H1 (cell line): ENCODE measurements at regions of chr5 and their contacts with region 1.

Region 1: GRCh38 chr5:112604732-112605630 is 132.7 kb upstream of the APC start:
- DNase-seq: no peak
- H3K4me3 ChIP-seq: no peak overlapping the region
- H3K27ac ChIP-seq: no peak overlapping the region
- H3K4me1 ChIP-seq: no peaks in the 10 kb centered on the region
- H3K27me3 ChIP-seq: no peaks in the 10 kb centered on the region
- CTCF ChIP-seq: peak; percentile 27 to 47 (median 35)
- EP300 ChIP-seq: no peak
- POLR2A ChIP-seq: no peak
- RAD21 ChIP-seq: peak; percentile 57 to 67

Region 2: GRCh38 chr5:112551419-112552032 is 53.5 kb before region 1 on chr5:
- CTCF ChIA-PET with region 1: interaction called, 35 read pairs
- POLR2A ChIA-PET with region 1: no interaction called
- DNase-seq: no peak
- H3K4me3 ChIP-seq: no peak overlapping the region
- H3K27ac ChIP-seq: no peak overlapping the region
- H3K4me1 ChIP-seq: no peaks in the 10 kb centered on the region
- H3K27me3 ChIP-seq: no peaks in the 10 kb centered on the region
- CTCF ChIP-seq: peak in 2 of 3 experiments; percentile 61 to 63; a peak in 2 of 4 replicates
- EP300 ChIP-seq: no peak
- POLR2A ChIP-seq: no peak
- RAD21 ChIP-seq: peak; percentile 86 to 87

Region 3: GRCh38 chr5:112594095-112594850 is 10.7 kb before region 1 on chr5:
- CTCF ChIA-PET with region 1: interaction called, 16 read pairs
- POLR2A ChIA-PET with region 1: interaction called, 3 read pairs
- DNase-seq: no peak
- H3K4me3 ChIP-seq: no peak overlapping the region
- H3K27ac ChIP-seq: no peak overlapping the region
- H3K4me1 ChIP-seq: no peaks in the 10 kb centered on the region
- H3K27me3 ChIP-seq: no peaks in the 10 kb centered on the region; a peak in 1 of 7 replicates
- CTCF ChIP-seq: no peak
- EP300 ChIP-seq: no peak
- POLR2A ChIP-seq: no peak
- RAD21 ChIP-seq: no peak

Region 4: GRCh38 chr5:112630246-112631009 is 25.4 kb after region 1 on chr5:
- CTCF ChIA-PET with region 1: no interaction called
- POLR2A ChIA-PET with region 1: no interaction called
- DNase-seq: no peak
- H3K4me3 ChIP-seq: no peak overlapping the region
- H3K27ac ChIP-seq: no peak overlapping the region
- H3K4me1 ChIP-seq: peaks cover 2 to 10% (median 6%) of the 10 kb centered on the region in 4 experiments; a peak in 4 of 7 replicates
- H3K27me3 ChIP-seq: no peaks in the 10 kb centered on the region; a peak in 1 of 7 replicates
- CTCF ChIP-seq: no peak
- EP300 ChIP-seq: no peak
- POLR2A ChIP-seq: no peak
- RAD21 ChIP-seq: no peak

Region 5: GRCh38 chr5:112657804-112658203 is 52.8 kb after region 1 on chr5:
- CTCF ChIA-PET with region 1: no interaction called
- POLR2A ChIA-PET with region 1: no interaction called
- DNase-seq: no peak
- H3K4me3 ChIP-seq: no peak overlapping the region
- H3K27ac ChIP-seq: no peak overlapping the region
- H3K4me1 ChIP-seq: no peaks in the 10 kb centered on the region
- H3K27me3 ChIP-seq: no peaks in the 10 kb centered on the region
- CTCF ChIP-seq: no peak
- EP300 ChIP-seq: no peak
- POLR2A ChIP-seq: no peak
- RAD21 ChIP-seq: peak; percentile 12 to 23; a peak in 2 of 4 replicates